HAP-1 (cell line): ENCODE measurements at regions of chr12 and their contacts with region 1.

Region 1: DNA sequence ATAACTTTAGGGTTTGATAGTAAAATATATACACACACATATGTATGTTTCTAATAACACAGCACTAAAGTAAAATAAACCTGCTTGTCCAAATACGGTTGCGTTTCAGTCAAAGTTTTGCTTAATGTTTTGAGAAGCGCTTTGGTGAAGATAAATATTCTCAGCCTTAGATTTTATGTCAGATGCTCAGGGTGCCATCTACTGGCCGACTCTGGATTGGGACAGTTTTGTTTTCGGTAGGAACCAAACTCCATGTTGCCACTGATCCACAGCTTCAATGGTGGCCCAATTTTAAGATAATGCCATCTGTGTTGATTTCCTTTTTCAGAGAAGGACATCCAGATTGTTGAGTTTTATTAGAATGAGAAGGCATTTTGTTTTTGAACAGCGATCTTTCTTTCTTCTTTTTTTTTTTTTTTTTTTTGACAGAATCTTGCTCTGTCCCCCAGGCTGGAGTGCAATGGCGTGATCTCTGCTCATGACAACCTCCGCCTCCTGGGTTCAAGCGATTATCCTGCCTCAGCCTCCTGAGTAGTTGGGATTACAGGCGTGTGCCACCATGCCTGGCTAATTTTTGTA is 43.1 kb downstream of the LLPH start:
- DNase-seq: peak; percentile 55 to 70
- H3K4me3 ChIP-seq: no peak overlapping the region
- H3K4me1 ChIP-seq: peaks cover 4% of the 10 kb centered on the region
- H3K27me3 ChIP-seq: no peaks in the 10 kb centered on the region

Region 2: GRCh38 chr12:65306366-65307168 is 780.9 kb before region 1 on chr12:
- in situ Hi-C with region 1: loop called (anchors 25 kb)
- DNase-seq: peak; percentile 20 to 32
- H3K4me3 ChIP-seq: no peak overlapping the region
- H3K4me1 ChIP-seq: peaks cover 6% of the 10 kb centered on the region; the same call in 1 of the 2 replicates
- H3K27me3 ChIP-seq: no peaks in the 10 kb centered on the region

Region 3: GRCh38 chr12:65556681-65557437 is 530.6 kb before region 1 on chr12:
- in situ Hi-C with region 1: loop called (anchors 25 kb)
- DNase-seq: peak; percentile 67 to 84
- H3K4me3 ChIP-seq: no peak overlapping the region
- H3K4me1 ChIP-seq: no peaks in the 10 kb centered on the region
- H3K27me3 ChIP-seq: peaks cover 14% of the 10 kb centered on the region

Region 4: DNA sequence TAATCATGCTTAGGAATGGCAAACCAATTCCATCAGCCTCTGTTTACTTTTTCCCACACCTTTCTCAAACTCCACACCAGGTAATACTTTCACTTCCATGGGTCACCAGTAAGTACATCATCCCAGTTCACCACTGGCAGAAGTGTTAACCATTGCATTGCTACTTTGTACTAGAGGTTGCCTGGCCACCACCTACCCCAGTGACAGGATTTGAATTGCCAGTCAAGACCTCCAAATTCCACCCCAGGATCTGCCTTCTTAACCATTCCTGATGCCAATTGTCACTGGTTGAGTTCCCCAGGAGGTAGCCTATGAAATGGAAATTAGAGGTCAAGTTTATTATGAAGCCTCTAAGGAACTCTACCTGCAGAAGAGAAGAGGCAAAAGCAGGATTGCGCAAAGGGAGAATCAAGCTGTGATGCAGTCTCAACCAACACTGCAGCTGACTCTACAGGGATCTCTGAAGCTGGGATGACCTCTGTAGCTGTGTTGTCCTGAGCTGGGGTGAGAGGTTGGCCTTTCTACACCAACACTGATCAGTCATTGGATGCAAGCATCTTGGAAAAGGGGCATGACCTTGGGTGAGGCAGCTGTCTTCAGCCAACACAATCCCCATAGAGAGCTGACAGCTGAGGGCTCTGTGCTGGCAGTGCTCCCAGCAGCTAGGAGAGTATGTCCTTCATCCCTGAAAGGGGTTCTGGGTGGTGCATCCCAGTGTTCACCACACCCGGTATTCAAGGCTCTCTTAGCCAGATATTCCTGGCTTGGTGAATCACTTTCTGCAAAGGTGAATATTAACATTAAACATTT is 300.2 kb before region 1 on chr12:
- in situ Hi-C with region 1: no loop called
- DNase-seq: no peak
- H3K4me3 ChIP-seq: no peak overlapping the region
- H3K4me1 ChIP-seq: no peaks in the 10 kb centered on the region
- H3K27me3 ChIP-seq: peaks cover 4% of the 10 kb centered on the region